Dorsolateral prefrontal cortex (tissue), 120 donors: ENCODE measurements at regions of chr5 and their contacts with region 1.

Region 1: DNA sequence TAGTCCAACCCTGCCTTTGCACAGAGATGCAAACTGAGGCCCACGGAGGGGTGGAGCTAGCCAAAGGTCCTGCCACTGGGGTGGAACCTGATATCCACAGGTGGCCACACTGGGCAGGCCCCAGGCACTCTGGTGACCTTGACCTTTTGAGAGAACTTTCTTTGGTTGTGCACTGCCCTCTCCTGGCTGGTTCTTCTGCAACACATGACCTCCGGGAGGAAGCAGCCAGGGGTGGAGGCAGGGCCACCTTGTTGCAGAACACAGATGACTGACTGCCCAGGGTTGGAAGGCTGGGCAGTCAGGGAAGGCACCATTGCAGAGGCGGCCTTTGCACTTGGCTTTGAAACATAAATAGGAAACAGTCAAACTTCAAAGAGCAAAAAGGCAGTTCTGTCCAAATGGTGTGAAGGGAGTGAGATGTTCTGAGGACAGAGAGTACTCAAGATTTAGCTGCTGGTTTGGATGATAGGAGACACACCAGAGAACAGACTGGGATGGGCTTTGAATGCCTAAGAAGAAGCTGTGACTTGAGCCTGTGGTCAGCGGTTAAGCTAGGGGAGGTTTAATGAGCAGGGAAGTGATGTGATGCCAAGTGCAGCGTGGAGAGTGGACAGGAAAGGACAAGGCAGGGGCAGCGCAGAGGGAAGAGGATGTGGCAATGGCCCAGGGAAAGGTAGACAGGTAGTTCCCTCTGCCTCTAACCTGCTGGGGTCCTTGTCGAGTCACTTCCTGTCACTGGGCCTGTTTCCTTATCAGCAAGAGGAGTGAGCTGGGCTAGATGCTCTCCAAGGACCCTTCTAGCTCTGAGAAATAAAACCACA is 6.8 kb upstream of the TCOF1 start:
- DNase-seq: peak; percentile 26 to 87 (median 78)
- H3K4me3 ChIP-seq: no peak overlapping the region
- H3K27ac ChIP-seq: peak overlapping the region in 57 of 59 donors; percentile 5 to 87 (median 62)
- H3K27me3 ChIP-seq: no peaks in the 10 kb centered on the region
- CTCF ChIP-seq: peak; percentile 41 to 95 (median 84)

Region 2: GRCh38 chr5:150129813-150130492 is 220.8 kb before region 1 on chr5:
- intact Hi-C with region 1: loop called (anchors 5 to 10 kb)
- DNase-seq: peak in 8 of 10 donors; percentile 39 to 79 (median 68)
- H3K4me3 ChIP-seq: peak overlapping the region in 30 of 59 donors; percentile 5 to 58 (median 29)
- H3K27ac ChIP-seq: peak overlapping the region in 26 of 59 donors; percentile 10 to 70 (median 47)
- H3K27me3 ChIP-seq: no peaks in the 10 kb centered on the region
- CTCF ChIP-seq: peak; percentile 75 to 97 (median 92)

Region 3: GRCh38 chr5:150272526-150272925 is 78.2 kb before region 1 on chr5:
- intact Hi-C with region 1: loop called (anchors 1 kb)
- DNase-seq: peak in 2 of 10 donors; percentile 60
- H3K4me3 ChIP-seq: no peak overlapping the region
- H3K27ac ChIP-seq: peak overlapping the region in 30 of 59 donors; percentile 3 to 85 (median 50)
- H3K27me3 ChIP-seq: no peaks in the 10 kb centered on the region
- CTCF ChIP-seq: peak in 54 of 56 donors; percentile 37 to 78 (median 56)

Region 4: GRCh38 chr5:150311015-150311692 is 39.6 kb before region 1 on chr5:
- intact Hi-C with region 1: no loop called
- DNase-seq: no peak
- H3K4me3 ChIP-seq: no peak overlapping the region
- H3K27ac ChIP-seq: no peak overlapping the region
- H3K27me3 ChIP-seq: no peaks in the 10 kb centered on the region
- CTCF ChIP-seq: no peak